ENCODE measurements at regions of chr15 and their contacts with region 1.

Region 1: DNA sequence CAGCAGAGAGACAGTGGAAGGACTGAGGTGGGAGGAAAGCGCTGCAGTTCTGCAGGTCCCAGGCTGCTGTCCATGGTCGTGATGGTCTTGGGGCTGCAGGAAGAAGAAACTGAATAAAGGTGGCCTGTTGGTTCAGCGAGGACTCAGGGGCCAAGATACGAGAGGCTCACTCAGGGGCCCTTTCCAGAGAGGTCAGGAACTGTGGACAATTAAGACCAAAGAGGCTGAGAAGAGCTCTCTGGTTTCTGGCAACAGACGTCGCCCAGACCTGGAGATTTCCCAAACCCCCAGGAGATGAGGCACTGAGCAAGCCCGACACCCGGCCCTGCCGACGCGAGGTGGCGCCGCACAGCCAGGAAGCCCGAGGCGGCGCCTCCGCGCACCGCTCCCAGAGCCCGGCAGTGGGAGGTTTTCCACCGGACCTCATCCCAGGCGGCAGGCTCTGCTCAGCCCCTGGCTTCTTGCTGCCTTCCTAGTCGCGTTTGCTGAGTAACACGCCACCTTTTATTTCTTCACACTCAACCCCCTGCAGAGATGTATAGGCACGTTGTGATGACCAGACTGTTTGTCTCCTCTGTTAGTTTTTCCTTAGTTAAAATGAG is 56.4 kb upstream of the ARRDC4 start:
- DNase-seq: peak; percentile 49
- ATAC-seq: no peak
- H3K4me3 Mint-ChIP-seq: no peak overlapping the region
- H3K27ac Mint-ChIP-seq: no peak overlapping the region
- H3K4me1 Mint-ChIP-seq: no peaks in the 10 kb centered on the region
- H3K27me3 Mint-ChIP-seq: peaks cover 19% of the 10 kb centered on the region
- CTCF ChIP-seq: peak; percentile 37

Region 2: DNA sequence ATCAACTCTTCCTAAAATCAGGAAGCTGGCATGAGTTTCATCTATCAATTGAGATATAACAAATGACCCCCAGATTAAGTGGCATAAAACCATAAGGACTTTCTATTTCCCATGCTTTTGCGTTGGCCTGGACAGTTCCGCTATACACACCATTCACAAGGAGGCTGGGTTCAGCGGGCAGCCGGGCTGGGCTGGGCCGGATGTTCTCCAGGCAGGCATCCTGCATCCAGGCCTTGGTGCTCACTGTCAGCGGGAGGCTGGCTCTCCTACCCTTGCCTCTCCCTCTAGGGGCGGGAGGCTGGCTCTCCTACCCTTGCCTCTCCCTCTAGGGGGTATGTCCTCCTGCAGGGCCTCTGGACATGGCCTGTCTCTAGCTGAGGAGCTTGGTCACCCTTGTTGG is 209.6 kb before region 1 on chr15:
- CTCF ChIA-PET with region 1: no interaction called
- POLR2A ChIA-PET with region 1: no interaction called
- intact Hi-C with region 1: no loop called
- DNase-seq: no peak
- ATAC-seq: no peak
- H3K4me3 Mint-ChIP-seq: no peak overlapping the region
- H3K27ac Mint-ChIP-seq: no peak overlapping the region
- H3K4me1 Mint-ChIP-seq: no peaks in the 10 kb centered on the region
- H3K27me3 Mint-ChIP-seq: no peaks in the 10 kb centered on the region
- CTCF ChIP-seq: no peak

Region 3: GRCh38 chr15:98085003-98085639 is 181.0 kb after region 1 on chr15:
- CTCF ChIA-PET with region 1: interaction called, 6 read pairs
- POLR2A ChIA-PET with region 1: no interaction called
- intact Hi-C with region 1: loop called (anchors 2 kb)
- DNase-seq: peak; percentile 51
- ATAC-seq: no peak
- H3K4me3 Mint-ChIP-seq: no peak overlapping the region
- H3K27ac Mint-ChIP-seq: no peak overlapping the region
- H3K4me1 Mint-ChIP-seq: no peaks in the 10 kb centered on the region
- H3K27me3 Mint-ChIP-seq: no peaks in the 10 kb centered on the region
- CTCF ChIP-seq: peak; percentile 58

Region 4: GRCh38 chr15:98177924-98178592 is 274.0 kb after region 1 on chr15:
- CTCF ChIA-PET with region 1: interaction called, 17 read pairs
- POLR2A ChIA-PET with region 1: no interaction called
- intact Hi-C with region 1: loop called (anchors 5 kb)
- DNase-seq: peak; percentile 31
- ATAC-seq: peak; percentile 74
- H3K4me3 Mint-ChIP-seq: no peak overlapping the region
- H3K27ac Mint-ChIP-seq: no peak overlapping the region
- H3K4me1 Mint-ChIP-seq: peaks cover 6% of the 10 kb centered on the region
- H3K27me3 Mint-ChIP-seq: peaks cover 14% of the 10 kb centered on the region
- CTCF ChIP-seq: peak; percentile 54